ENCODE measurements at regions of chr15 and their contacts with region 1.

Region 1: DNA sequence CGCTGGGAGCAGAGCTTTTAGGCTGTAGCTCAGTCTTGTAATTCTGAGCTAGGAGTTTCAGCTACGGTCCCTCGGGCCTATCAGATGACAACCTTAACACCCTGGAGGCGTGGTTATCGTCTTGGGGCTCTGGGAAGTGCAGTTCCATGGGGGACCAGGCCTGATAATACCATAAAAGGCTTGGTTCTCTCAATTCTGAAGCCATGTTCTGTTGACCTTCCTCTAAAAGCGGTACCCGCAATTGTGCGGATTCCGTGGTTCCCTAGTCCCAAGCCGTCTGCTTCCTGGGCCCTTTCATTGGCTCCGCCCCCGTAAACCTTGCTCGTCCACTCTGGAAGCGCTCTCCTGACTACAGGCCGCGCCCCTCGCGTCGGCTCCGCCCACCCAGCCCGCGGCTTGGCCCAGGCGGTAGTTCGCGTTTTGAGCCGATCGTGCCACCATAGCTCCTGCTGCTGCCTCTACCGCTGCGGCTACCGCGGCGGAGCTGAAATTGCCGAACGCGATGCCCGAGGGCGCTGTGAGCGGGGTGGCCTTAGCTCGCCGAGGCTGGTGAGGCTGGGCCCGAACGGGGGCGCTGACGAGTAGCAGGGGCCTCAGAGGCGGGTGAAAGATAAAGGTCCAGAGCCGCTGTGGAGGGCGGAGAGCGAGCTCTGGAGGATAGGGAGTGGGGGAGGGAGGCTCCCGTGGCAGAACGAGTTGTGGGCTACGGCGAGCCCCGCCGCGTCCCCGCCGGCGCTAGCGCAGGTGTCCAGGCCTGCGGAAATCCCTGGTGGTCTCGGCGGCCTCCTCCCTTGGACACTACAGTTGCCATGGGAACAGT is at the start of gene MAPKBP1:
- DNase-seq: peak; percentile 97 to 99
- H3K4me3 ChIP-seq: peak within 1 kb of the TSS; percentile 83 to 84
- H3K27ac ChIP-seq: peak within 1 kb of the TSS; percentile 80 to 88
- H3K4me1 ChIP-seq: peaks cover 0 to 44% (median 33%) of the 10 kb centered on the region in 4 donors
- H3K27me3 ChIP-seq: no peaks in the 10 kb centered on the region
- CTCF ChIP-seq: peak; percentile 50 to 59

Region 2: GRCh38 chr15:41806291-41807181 is 32.3 kb after region 1 on chr15:
- intact Hi-C with region 1: loop called (anchors 2 kb)
- DNase-seq: no peak
- H3K4me3 ChIP-seq: no peak overlapping the region
- H3K27ac ChIP-seq: no peak overlapping the region
- H3K4me1 ChIP-seq: peaks cover 0 to 21% (median 6%) of the 10 kb centered on the region in 4 donors
- H3K27me3 ChIP-seq: no peaks in the 10 kb centered on the region
- CTCF ChIP-seq: no peak

Region 3: GRCh38 chr15:41904541-41905005 is 130.3 kb after region 1 on chr15:
- intact Hi-C with region 1: loop called (anchors 10 kb)
- DNase-seq: peak in 1 of 2 donors; percentile 45
- H3K4me3 ChIP-seq: no peak overlapping the region
- H3K27ac ChIP-seq: no peak overlapping the region
- H3K4me1 ChIP-seq: peaks cover 0 to 13% (median 3%) of the 10 kb centered on the region in 4 donors
- H3K27me3 ChIP-seq: no peaks in the 10 kb centered on the region
- CTCF ChIP-seq: peak; percentile 70 to 74